Common myeloid progenitor, CD34-positive (primary cell): ENCODE measurements at regions of chr3 and their contacts with region 1.

Region 1: DNA sequence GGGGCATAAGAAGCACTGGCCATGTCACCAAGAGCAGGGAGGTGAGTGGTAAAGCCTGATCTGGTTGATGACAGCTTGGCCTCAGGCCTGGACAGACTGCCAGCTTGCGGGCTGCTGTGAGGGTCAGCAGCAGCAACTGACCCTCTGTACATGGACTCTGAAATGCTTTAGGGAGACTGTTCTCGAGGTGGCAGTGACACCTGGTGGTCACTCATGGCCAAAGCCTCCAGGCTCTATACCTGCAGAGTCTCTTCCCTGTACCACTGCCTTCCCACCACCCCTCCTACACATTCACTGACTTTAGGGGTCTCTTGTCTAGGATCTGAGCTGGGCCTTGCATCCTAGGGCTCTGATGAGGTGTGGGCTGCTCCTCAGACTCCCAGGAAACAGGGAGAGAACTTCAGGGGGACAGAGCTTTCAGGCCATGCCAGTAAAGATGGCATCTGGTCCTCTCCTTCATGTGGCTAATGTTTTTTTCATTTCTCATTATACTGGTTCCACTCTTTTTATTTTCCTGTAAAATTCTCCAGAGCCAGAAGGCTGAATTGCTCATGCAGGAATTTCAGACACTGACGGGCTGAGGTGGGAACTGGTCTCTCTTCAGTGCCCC is 17.2 kb upstream of the TIMP4 start:
- DNase-seq: peak; percentile 22 to 46 (median 30)
- H3K4me3 ChIP-seq: no peak overlapping the region
- H3K27ac ChIP-seq: no peak overlapping the region
- H3K4me1 ChIP-seq: peaks cover 8 to 28% (median 13%) of the 10 kb centered on the region in 4 experiments
- H3K27me3 ChIP-seq: no peaks in the 10 kb centered on the region

Region 2: DNA sequence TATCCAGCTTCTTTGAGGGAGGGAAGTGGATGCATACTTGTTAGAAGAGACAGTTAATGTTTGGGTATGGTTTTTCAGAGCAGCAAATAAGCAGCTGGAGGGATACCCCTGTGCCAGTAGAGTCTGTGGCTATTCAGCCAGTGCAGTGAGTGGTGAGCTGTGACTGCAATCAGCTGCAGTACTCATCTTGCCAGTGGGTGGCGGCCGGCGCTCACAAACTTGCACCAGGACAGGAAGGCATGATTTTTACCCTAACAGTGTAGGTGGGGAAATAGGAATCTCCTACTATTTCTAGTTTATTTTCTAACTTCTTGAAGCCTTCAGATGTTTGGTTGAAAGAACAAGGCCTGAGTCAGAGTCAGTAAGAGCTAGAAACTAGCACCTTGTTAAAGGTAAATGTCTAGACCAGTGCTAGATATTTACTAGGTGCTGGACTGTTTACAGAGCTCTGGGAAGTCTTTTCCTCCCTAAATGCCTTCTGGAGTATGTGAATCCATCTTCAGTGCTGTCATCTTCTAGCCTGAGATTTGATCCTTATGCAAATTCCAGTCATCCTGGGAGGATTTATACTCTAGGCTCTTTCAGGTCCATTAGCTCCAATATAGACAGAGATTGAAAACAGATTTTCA is 40.8 kb before region 1 on chr3:
- CTCF ChIA-PET with region 1: interaction called, 35 read pairs
- POLR2A ChIA-PET with region 1: no interaction called
- DNase-seq: peak; percentile 55 to 72 (median 69)
- H3K4me3 ChIP-seq: no peak overlapping the region
- H3K27ac ChIP-seq: no peak overlapping the region
- H3K4me1 ChIP-seq: peaks cover 0 to 8% (median 1%) of the 10 kb centered on the region in 4 experiments
- H3K27me3 ChIP-seq: peaks cover 0 to 6% (median 4%) of the 10 kb centered on the region in 5 experiments

Region 3: GRCh38 chr3:12143949-12144504 is 31.9 kb before region 1 on chr3:
- CTCF ChIA-PET with region 1: interaction called, 28 read pairs
- POLR2A ChIA-PET with region 1: no interaction called
- DNase-seq: no peak
- H3K4me3 ChIP-seq: no peak overlapping the region
- H3K27ac ChIP-seq: no peak overlapping the region
- H3K4me1 ChIP-seq: no peaks in the 10 kb centered on the region
- H3K27me3 ChIP-seq: peaks cover 0 to 4% (median 0%) of the 10 kb centered on the region in 5 experiments

Region 4: DNA sequence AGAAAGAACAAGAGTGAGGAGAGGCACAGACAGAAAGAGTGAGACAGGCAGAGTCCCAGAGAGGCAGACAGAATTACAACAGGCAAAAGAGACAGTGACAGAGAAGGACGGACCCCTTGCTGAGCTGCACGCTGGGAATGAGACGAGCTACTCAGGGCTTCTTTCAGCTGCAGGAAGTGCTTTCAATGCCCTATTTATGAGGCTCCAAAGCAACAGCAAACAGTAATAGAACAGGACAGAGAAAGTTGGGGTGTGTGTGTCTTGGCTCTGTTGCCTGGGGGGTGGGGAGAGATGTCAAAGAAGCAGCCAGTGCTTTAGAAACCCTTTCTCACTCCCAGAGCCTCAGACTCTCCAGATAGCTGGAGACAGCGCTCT is 16.7 kb before region 1 on chr3:
- CTCF ChIA-PET with region 1: interaction called, 12 read pairs
- POLR2A ChIA-PET with region 1: no interaction called
- DNase-seq: no peak
- H3K4me3 ChIP-seq: peak overlapping the region in 2 of 7 experiments; percentile 23 to 59
- H3K27ac ChIP-seq: no peak overlapping the region
- H3K4me1 ChIP-seq: peaks cover 0 to 7% (median 6%) of the 10 kb centered on the region in 4 experiments
- H3K27me3 ChIP-seq: peaks cover 0 to 38% (median 17%) of the 10 kb centered on the region in 5 experiments

Region 5: GRCh38 chr3:12187448-12188327 is 11.7 kb after region 1 on chr3:
- CTCF ChIA-PET with region 1: interaction called, 25 read pairs
- POLR2A ChIA-PET with region 1: no interaction called
- DNase-seq: peak; percentile 38 to 81 (median 78)
- H3K4me3 ChIP-seq: peak overlapping the region in 2 of 7 experiments; percentile 13
- H3K27ac ChIP-seq: peak overlapping the region in 1 of 2 experiments; percentile 14
- H3K4me1 ChIP-seq: peaks cover 5 to 48% (median 23%) of the 10 kb centered on the region in 4 experiments
- H3K27me3 ChIP-seq: no peaks in the 10 kb centered on the region

Region 6: DNA sequence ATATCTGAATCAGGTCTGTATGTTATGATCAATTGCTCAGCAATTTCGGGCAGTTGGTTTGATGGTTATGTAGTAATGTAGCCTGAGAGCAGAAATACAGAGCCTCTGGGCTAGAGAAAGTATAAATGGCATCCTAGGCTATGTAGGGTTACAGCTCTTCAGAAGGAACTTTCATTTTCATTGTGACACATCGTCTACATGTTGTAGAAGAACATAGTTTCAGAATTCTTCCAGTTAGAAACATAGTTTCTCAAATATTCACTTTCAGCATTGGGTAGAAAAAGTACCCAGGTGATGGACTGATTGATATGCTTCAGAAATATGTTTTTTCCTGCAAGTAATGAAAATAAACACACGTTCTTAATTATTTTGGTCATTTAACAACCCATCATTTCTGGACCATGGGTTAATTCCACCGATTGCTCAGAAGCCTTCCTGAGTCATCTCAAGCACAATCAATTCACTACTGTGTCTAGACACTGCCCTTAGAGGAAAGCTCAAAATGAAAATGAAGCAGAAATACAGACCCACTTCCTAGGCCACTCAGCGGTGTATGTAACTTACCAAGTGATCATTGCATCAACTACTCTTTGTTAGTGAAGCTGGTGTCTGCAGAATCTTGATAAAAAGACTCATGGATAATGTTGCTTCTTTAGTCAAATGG is 219.5 kb after region 1 on chr3:
- CTCF ChIA-PET with region 1: no interaction called
- POLR2A ChIA-PET with region 1: no interaction called
- DNase-seq: no peak
- H3K4me3 ChIP-seq: no peak overlapping the region
- H3K27ac ChIP-seq: no peak overlapping the region
- H3K4me1 ChIP-seq: peaks cover 0 to 6% (median 2%) of the 10 kb centered on the region in 4 experiments
- H3K27me3 ChIP-seq: peaks cover 0 to 51% (median 18%) of the 10 kb centered on the region in 5 experiments

Region 7: DNA sequence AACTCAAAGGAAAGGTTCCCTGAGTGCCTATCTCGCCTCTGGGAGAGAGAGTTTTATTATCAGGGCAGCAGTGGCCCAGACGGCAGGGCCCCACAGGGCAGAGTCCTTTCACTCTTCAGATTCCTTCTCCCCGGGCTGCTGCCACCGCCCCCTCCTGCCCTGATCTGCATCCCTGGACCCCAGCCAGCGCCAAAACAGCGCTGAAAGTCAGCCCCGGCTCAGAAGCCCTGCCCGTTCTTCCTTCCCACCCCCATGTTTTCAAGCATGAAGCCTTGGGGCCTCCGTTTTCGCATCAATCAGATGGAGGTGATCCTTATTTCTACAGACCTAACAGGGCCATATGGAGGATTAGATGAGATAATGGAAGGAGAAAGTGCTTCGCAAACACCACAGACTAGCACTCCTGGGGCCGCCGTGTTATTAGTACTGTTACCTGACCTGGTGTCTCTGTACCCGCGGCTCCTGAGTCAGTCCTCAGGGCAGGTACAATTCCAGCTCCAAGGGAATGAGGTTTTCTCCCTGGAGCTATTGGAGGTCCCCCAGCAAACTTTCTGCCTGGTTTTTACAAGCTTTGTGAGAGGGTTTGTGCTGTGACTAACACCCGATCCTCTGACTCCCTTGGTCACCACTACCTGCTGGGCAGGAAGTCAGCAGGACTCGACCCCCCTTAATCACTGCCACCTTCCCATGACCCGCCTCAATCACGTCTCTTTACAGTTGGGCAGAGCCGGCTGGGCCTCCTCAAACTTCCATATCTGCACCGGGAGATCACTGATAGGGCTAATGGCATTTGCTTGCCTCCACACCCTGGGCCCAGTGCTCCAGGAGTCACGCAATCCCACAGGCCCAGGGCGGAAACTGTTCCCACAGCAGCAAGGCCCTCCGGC is 268.9 kb after region 1 on chr3:
- CTCF ChIA-PET with region 1: no interaction called
- POLR2A ChIA-PET with region 1: no interaction called
- DNase-seq: no peak
- H3K4me3 ChIP-seq: no peak overlapping the region
- H3K27ac ChIP-seq: no peak overlapping the region
- H3K4me1 ChIP-seq: no peaks in the 10 kb centered on the region
- H3K27me3 ChIP-seq: peaks cover 0 to 14% (median 2%) of the 10 kb centered on the region in 5 experiments